Ovary (tissue), 10 donors: ENCODE measurements at regions of chr12 and their contacts with region 1.

Region 1: DNA sequence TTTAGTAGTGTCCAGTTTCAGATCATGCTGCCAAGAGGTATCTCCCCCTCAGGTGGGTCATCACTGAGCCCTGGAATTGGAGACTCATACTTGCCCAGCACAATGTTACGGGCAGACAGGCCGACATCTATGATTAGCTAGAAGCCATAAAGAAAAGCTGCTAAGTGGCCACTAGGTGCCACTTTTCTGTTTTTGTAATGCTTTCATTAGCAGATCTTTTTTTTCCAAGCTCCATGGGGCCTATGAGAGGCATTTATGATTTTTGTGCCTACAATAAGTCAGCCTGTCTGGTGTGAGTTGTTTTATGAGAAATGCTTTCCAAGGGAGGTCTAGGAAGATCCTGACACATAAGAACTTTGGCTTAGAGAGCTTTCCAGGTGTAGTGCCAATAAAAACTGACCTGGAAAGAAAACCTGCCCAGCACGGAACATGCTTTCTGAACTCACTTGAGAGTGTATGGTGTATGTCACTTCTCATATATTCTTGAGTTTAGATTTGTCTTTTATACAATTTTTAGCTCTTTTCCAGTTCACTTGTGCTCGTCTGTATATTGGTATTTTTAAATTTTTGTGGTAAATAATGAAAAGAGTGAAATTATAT is 21.8 kb upstream of the SMCO2 start:
- DNase-seq: peak in 4 of 5 donors; percentile 23 to 47 (median 26)
- H3K4me3 ChIP-seq: no peak overlapping the region
- H3K27ac ChIP-seq: no peak overlapping the region
- H3K4me1 ChIP-seq: peaks cover 2% of the 10 kb centered on the region
- H3K27me3 ChIP-seq: no peaks in the 10 kb centered on the region
- CTCF ChIP-seq: peak; percentile 43 to 70 (median 53)
- EP300 ChIP-seq: no peak
- POLR2A ChIP-seq: no peak

Region 2: DNA sequence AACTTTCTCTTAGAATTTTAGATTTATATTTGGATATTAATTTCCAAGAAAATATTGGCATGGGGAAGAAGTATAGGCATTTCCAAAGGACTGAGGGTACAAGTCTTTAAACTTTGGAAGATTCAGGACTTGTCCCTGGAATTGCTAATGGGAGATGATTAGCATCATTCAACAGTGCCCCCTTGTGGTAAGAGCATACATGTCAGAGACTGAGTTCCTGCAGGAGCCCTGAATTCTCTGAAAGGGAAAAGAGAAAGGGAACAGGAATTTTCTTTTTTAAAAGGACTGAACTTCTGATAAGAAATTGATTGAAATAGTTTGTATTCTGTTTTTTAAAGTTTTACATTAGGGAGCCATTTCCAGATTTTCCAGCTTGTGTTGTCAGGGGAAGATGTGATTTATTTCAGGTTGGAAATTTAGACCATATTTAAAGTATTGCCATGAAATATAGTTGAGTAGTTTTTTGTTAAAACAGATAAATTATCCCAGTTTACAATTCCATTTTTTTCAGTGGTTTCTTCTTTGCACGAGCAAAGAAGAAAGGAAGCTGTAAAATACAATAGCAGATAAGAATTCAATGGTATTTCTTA is 227.5 kb after region 1 on chr12:
- intact Hi-C with region 1: loop called in 1 of 4 experiments (anchors 10 kb)
- DNase-seq: peak in 3 of 5 donors; percentile 37 to 69 (median 55)
- H3K4me3 ChIP-seq: no peak overlapping the region
- H3K27ac ChIP-seq: no peak overlapping the region
- H3K4me1 ChIP-seq: no peaks in the 10 kb centered on the region
- H3K27me3 ChIP-seq: no peaks in the 10 kb centered on the region
- CTCF ChIP-seq: peak; percentile 70 to 86 (median 75)
- EP300 ChIP-seq: no peak
- POLR2A ChIP-seq: no peak